Posterior cingulate gyrus (tissue), 11 donors: ENCODE measurements at regions of chr15 and their contacts with region 1.

Region 1: DNA sequence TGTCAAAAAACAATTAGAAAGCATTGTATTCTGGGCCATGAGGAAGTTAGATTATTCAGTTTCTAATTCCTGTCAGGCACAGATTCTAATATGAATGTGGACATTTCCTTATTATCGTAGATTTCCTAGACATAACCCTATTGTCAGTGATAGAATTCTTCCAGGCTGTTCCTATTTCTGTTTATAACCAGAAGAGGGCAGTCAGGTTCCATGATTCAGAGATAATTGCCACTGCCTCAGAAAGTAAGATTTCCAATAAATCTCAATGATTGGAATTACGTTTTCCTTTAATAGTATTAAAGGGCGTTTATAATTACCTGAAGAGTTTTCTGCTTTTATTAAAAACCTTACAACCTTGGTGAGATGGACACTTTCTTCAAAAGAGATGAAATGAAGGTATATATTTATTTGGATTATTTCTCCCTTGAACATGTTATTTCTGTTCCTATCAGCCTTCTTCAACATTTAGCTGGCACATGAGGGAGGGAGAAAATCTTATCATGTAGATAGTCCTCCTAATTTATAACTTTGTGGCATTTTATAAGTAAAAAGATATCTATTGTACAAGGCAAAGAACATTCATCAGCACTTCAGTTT is 439.2 kb downstream of the MCTP2 start:
- DNase-seq: no peak

Region 2: DNA sequence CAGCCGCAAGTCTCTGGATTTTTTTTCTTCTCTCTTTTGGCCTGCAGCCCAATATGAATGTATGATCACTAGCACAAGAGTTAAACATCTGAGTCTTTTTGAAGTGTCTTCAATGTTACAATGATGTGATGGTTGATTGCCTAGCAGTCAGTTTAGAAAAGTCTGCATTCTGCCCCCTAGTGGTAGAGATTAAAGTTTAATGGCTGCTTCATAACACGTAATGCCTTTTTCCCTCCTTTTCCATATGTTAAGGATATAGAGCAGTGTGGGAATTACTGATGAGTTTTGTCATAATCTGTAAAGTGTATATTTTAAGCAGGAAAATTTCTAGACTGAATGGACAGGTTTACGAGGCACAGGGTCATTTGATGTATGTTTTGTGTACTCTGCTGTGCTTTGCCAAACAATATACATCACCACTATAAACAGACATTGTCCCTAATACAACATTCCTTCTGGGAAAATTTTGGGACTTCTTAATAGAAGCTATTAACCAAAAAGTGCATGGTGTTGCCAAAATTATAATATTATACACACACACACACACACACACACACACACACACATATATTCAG is 621.4 kb after region 1 on chr15:
- intact Hi-C with region 1: loop called (anchors 5 kb)
- DNase-seq: no peak